Activated T-helper 1 cell treated with anti-CD3 and anti-CD28 coated beads, Interleukin-12 subunit alpha, Interleukin-12 subunit beta, Interleukin-2, Interleukin-4 antibody, amounts not matched to agents 30 ng/mL and 10 ng/mL and 1 ng/mL, durations not matched to agents 14 hours and 24 hours and 36 hours (primary cell): ENCODE measurements at regions of chr7 and their contacts with region 1.

Region 1: GRCh38 chr7:154503962-154504550 is 451.9 kb downstream of the DPP6 start:
- DNase-seq: no peak
- H3K4me3 Mint-ChIP-seq: no peak overlapping the region
- H3K27ac Mint-ChIP-seq: no peak overlapping the region
- H3K4me1 Mint-ChIP-seq: no peaks in the 10 kb centered on the region
- H3K27me3 Mint-ChIP-seq: no peaks in the 10 kb centered on the region

Region 2: GRCh38 chr7:153381275-153382040 is 1122.6 kb before region 1 on chr7:
- intact Hi-C with region 1: loop called (anchors 10 kb)
- DNase-seq: no peak
- H3K4me3 Mint-ChIP-seq: no peak overlapping the region
- H3K27ac Mint-ChIP-seq: no peak overlapping the region
- H3K4me1 Mint-ChIP-seq: no peaks in the 10 kb centered on the region
- H3K27me3 Mint-ChIP-seq: no peaks in the 10 kb centered on the region